CD4-positive, alpha-beta T cell (primary cell): ENCODE measurements at regions of chr4 and their contacts with region 1.

Region 1: DNA sequence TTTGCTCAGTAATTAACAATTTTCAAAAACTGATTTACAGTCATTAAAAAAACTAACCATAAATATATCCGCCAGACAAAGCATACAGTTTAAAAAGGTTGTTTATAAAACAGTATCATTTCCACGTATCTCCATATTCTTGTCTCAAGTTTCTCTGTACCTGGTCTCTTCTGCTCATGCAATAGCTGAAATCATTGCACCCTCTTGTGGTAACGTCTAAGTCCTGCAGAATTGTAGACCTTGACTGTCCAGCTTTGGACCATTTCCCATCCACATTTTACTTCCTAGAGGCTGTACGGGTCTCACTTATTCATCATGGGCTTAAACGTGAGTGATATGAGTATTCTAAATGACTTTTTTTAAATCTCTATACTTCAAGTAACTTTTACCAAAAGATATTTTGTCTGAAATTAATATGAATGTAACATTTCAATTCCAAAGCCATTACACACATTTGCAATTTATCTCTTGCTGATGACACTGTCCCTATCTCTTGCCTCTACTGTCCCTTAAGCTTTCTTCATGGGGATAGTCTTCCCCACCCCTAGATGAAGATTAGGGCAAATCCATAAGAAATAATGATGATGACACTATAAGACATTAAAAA is 118.5 kb downstream of the BTC start:
- DNase-seq: peak in 4 of 14 experiments; percentile 4 to 58 (median 43)
- ATAC-seq: peak; percentile 69
- H3K4me3 ChIP-seq: no peak overlapping the region
- H3K4me3 Mint-ChIP-seq: no peak overlapping the region
- H3K27ac ChIP-seq: no peak overlapping the region
- H3K27ac Mint-ChIP-seq: no peak overlapping the region
- H3K4me1 ChIP-seq: no peaks in the 10 kb centered on the region
- H3K4me1 Mint-ChIP-seq: peaks cover 3% of the 10 kb centered on the region
- H3K27me3 ChIP-seq: no peaks in the 10 kb centered on the region
- H3K27me3 Mint-ChIP-seq: peaks cover 5% of the 10 kb centered on the region
- CTCF ChIP-seq: peak; percentile 64

Region 2: GRCh38 chr4:74189331-74190043 is 486.3 kb before region 1 on chr4:
- CTCF ChIA-PET with region 1: interaction called, 3 read pairs
- POLR2A ChIA-PET with region 1: no interaction called
- intact Hi-C with region 1: loop called in 1 of 2 experiments (anchors 5 kb)
- DNase-seq: peak in 4 of 14 experiments; percentile 6 to 69 (median 56)
- ATAC-seq: peak; percentile 34
- H3K4me3 ChIP-seq: no peak overlapping the region
- H3K4me3 Mint-ChIP-seq: no peak overlapping the region
- H3K27ac ChIP-seq: no peak overlapping the region
- H3K27ac Mint-ChIP-seq: no peak overlapping the region
- H3K4me1 ChIP-seq: no peaks in the 10 kb centered on the region
- H3K4me1 Mint-ChIP-seq: no peaks in the 10 kb centered on the region
- H3K27me3 ChIP-seq: no peaks in the 10 kb centered on the region
- H3K27me3 Mint-ChIP-seq: no peaks in the 10 kb centered on the region
- CTCF ChIP-seq: peak; percentile 70

Region 3: GRCh38 chr4:74228691-74229640 is 446.8 kb before region 1 on chr4:
- CTCF ChIA-PET with region 1: interaction called, 3 read pairs
- POLR2A ChIA-PET with region 1: no interaction called
- intact Hi-C with region 1: loop called (anchors 1 to 5 kb)
- DNase-seq: peak; percentile 51 to 84 (median 66)
- ATAC-seq: peak; percentile 75
- H3K4me3 ChIP-seq: no peak overlapping the region
- H3K4me3 Mint-ChIP-seq: no peak overlapping the region
- H3K27ac ChIP-seq: no peak overlapping the region
- H3K27ac Mint-ChIP-seq: no peak overlapping the region
- H3K4me1 ChIP-seq: no peaks in the 10 kb centered on the region
- H3K4me1 Mint-ChIP-seq: no peaks in the 10 kb centered on the region
- H3K27me3 ChIP-seq: no peaks in the 10 kb centered on the region
- H3K27me3 Mint-ChIP-seq: no peaks in the 10 kb centered on the region
- CTCF ChIP-seq: peak; percentile 91

Region 4: DNA sequence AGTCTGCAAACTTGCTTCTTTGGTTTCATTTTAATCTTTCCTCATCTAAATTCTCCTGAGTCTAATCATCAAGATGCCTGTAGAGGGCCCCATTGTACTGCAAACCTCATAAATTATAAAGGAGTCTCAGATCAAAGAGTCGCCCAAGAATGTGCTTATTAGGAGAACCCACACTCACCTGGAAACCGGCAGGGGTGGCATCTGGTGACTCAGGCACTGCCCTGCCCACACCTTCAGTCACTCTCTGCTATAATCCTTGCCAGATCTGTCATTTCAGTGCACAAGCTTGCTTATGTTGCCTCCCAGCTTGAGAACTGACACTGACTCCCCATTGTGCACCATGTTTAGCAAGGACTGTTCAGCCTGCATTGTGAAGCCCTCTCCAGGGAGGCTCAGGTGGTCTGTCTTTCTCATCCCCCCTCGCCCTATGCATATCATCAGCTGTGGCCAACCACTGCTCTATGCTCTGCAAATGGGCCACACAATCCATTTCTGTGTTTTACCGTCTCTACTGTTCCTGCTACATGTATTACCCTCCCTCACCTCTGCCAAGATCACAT is 355.1 kb before region 1 on chr4:
- CTCF ChIA-PET with region 1: no interaction called
- POLR2A ChIA-PET with region 1: no interaction called
- intact Hi-C with region 1: loop called (anchors 5 kb)
- DNase-seq: peak in 6 of 14 experiments; percentile 1 to 59 (median 26)
- ATAC-seq: peak; percentile 79
- H3K4me3 ChIP-seq: no peak overlapping the region
- H3K4me3 Mint-ChIP-seq: no peak overlapping the region
- H3K27ac ChIP-seq: no peak overlapping the region
- H3K27ac Mint-ChIP-seq: no peak overlapping the region
- H3K4me1 ChIP-seq: peaks cover 5% of the 10 kb centered on the region
- H3K4me1 Mint-ChIP-seq: no peaks in the 10 kb centered on the region
- H3K27me3 ChIP-seq: peaks cover 0 to 15% of the 10 kb centered on the region in 2 experiments
- H3K27me3 Mint-ChIP-seq: peaks cover 34% of the 10 kb centered on the region
- CTCF ChIP-seq: no peak

Region 5: DNA sequence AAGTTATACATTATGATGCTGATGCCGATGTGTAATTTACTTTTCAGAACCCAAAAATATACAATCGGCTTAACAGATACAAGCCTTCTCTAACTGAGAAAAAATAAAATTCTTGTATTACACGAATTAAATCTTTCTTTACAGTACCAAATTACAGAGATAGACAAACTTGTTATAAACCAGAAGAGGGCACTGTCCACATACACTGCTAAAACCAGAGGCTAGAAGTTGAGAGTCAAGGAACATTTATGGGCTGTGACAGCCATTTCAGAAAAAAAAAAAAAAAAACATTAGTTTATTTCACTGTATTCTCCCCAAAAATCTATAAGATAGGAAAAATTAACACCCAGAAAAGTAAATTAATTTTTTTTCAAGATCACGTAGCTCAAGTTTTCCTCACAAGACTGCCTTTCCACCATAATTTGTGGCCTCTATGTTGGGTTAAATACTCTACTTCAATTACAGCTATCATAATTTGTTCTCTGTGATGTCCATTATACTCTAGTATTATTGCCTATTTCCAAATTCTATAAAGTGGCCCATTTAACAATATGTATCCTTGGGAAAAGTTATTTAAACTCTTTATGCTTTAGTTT is 298.8 kb before region 1 on chr4:
- CTCF ChIA-PET with region 1: interaction called, 3 read pairs
- POLR2A ChIA-PET with region 1: no interaction called
- intact Hi-C with region 1: loop called (anchors 1 to 2 kb)
- DNase-seq: peak in 3 of 14 experiments; percentile 55 to 68 (median 67)
- ATAC-seq: peak; percentile 86
- H3K4me3 ChIP-seq: no peak overlapping the region
- H3K4me3 Mint-ChIP-seq: no peak overlapping the region
- H3K27ac ChIP-seq: no peak overlapping the region
- H3K27ac Mint-ChIP-seq: no peak overlapping the region
- H3K4me1 ChIP-seq: no peaks in the 10 kb centered on the region
- H3K4me1 Mint-ChIP-seq: no peaks in the 10 kb centered on the region
- H3K27me3 ChIP-seq: no peaks in the 10 kb centered on the region
- H3K27me3 Mint-ChIP-seq: peaks cover 3% of the 10 kb centered on the region
- CTCF ChIP-seq: peak; percentile 79

Region 6: DNA sequence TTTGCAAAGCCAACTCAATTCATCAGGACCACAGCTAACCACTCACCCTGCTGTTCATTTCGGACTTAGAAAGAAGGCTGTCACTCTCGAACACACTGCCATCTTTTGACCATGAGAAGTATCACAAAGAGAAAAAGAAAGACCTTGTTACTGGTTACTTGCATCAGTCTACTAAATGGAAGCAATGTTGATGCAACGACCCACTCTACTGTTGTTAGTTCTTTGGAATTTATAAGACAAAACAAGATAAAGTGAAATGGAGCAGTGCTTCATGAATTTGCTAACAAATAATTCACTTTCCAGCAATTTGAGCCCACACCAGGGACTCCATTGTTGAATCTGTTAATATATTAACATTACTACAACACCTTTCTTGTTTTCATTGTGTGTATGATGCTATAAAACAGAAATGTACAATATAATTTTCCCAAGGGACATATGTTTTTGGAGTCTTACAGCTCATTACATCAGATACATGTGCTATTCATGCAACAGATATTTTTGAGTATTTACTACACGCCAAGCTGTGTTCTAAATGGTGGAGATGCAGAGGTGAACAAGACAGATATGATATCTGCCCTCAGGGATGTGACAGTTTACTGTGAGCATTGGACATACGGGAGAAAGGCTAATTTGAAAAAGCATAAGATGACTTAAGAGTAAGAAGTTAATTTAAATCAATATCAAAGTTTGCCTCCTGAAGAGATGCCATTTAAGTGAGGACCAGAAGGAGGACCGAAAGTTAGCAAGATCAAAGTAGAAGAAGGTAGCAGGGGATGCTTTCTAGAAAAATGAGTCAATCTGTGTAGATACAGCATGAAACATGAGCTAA is 143.6 kb before region 1 on chr4:
- CTCF ChIA-PET with region 1: no interaction called
- POLR2A ChIA-PET with region 1: no interaction called
- intact Hi-C with region 1: loop called (anchors 2 to 5 kb)
- DNase-seq: peak in 5 of 14 experiments; percentile 3 to 60 (median 34)
- ATAC-seq: no peak
- H3K4me3 ChIP-seq: no peak overlapping the region
- H3K4me3 Mint-ChIP-seq: no peak overlapping the region
- H3K27ac ChIP-seq: no peak overlapping the region
- H3K27ac Mint-ChIP-seq: no peak overlapping the region
- H3K4me1 ChIP-seq: no peaks in the 10 kb centered on the region
- H3K4me1 Mint-ChIP-seq: no peaks in the 10 kb centered on the region
- H3K27me3 ChIP-seq: no peaks in the 10 kb centered on the region
- H3K27me3 Mint-ChIP-seq: peaks cover 14% of the 10 kb centered on the region
- CTCF ChIP-seq: peak; percentile 59

Region 7: GRCh38 chr4:74623041-74623440 is 52.7 kb before region 1 on chr4:
- CTCF ChIA-PET with region 1: no interaction called
- POLR2A ChIA-PET with region 1: no interaction called
- intact Hi-C with region 1: loop called in 1 of 2 experiments (anchors 5 kb)
- DNase-seq: peak in 4 of 14 experiments; percentile 24 to 58 (median 48)
- ATAC-seq: peak; percentile 79
- H3K4me3 ChIP-seq: no peak overlapping the region
- H3K4me3 Mint-ChIP-seq: peak overlapping the region; percentile 36
- H3K27ac ChIP-seq: no peak overlapping the region
- H3K27ac Mint-ChIP-seq: no peak overlapping the region
- H3K4me1 ChIP-seq: no peaks in the 10 kb centered on the region
- H3K4me1 Mint-ChIP-seq: peaks cover 34% of the 10 kb centered on the region
- H3K27me3 ChIP-seq: no peaks in the 10 kb centered on the region
- H3K27me3 Mint-ChIP-seq: no peaks in the 10 kb centered on the region
- CTCF ChIP-seq: peak; percentile 44